Head of caudate nucleus (tissue), 42 donors: ENCODE measurements at regions of chr5 and their contacts with region 1.

Region 1: GRCh38 chr5:134873987-134874830 is at the start of gene TXNDC15:
- DNase-seq: peak; percentile 69 to 95 (median 89)

Region 2: GRCh38 chr5:134904630-134905245 is 30.5 kb after region 1 on chr5 and contains the start of gene PCBD2:
- intact Hi-C with region 1: loop called (anchors 2 kb)
- DNase-seq: peak; percentile 66 to 95 (median 90)